ENCODE measurements at regions of chr5 and their contacts with region 1.

Region 1: GRCh38 chr5:148443998-148444397 is 60.2 kb downstream of the FBXO38 start:
- DNase-seq: peak; percentile 79
- H3K4me3 ChIP-seq: no peak overlapping the region
- H3K27ac ChIP-seq: no peak overlapping the region
- H3K4me1 ChIP-seq: no peaks in the 10 kb centered on the region
- H3K27me3 ChIP-seq: no peaks in the 10 kb centered on the region
- CTCF ChIP-seq: peak; percentile 48 to 50
- POLR2A ChIP-seq: no peak

Region 2: DNA sequence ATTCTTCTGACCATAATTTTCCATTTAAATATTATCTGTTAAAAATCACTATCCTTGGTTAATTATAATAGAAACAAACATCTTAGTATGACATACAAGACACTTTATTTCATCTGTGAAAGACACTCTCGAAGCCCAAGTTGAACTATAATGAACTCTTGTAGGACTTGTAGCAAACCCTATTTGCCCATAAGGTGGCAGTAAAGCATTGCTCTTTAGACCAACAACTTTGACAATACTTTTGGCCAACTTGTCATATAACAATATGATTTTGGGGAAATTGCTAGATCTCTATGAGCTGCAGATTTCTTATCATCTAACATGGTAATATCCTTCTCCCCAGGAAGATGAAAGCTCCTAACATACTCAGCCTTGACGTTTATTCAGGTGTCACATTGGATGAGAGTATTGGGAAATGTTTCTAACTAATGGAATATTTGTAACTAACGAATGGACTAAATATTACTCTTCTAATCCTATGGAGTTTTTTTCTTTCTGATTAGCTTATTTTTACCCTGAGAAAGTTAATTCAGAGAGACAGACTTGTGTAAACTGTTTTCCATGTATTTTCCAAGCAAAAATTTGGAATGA is 264.7 kb before region 1 on chr5:
- CTCF ChIA-PET with region 1: interaction called, 24 read pairs
- POLR2A ChIA-PET with region 1: no interaction called
- dilution Hi-C with region 1: no loop called
- intact Hi-C with region 1: loop called (anchors 1 kb)
- DNase-seq: peak; percentile 78
- H3K4me3 ChIP-seq: no peak overlapping the region
- H3K27ac ChIP-seq: no peak overlapping the region
- H3K4me1 ChIP-seq: no peaks in the 10 kb centered on the region
- H3K27me3 ChIP-seq: no peaks in the 10 kb centered on the region
- CTCF ChIP-seq: peak; percentile 53 to 56
- POLR2A ChIP-seq: no peak

Region 3: GRCh38 chr5:148290271-148291195 is 153.5 kb before region 1 on chr5:
- CTCF ChIA-PET with region 1: interaction called, 9 read pairs
- POLR2A ChIA-PET with region 1: no interaction called
- dilution Hi-C with region 1: no loop called
- intact Hi-C with region 1: loop called (anchors 10 kb)
- DNase-seq: peak; percentile 36
- H3K4me3 ChIP-seq: no peak overlapping the region
- H3K27ac ChIP-seq: no peak overlapping the region
- H3K4me1 ChIP-seq: no peaks in the 10 kb centered on the region
- H3K27me3 ChIP-seq: no peaks in the 10 kb centered on the region
- CTCF ChIP-seq: peak; percentile 24 to 42
- POLR2A ChIP-seq: no peak

Region 4: DNA sequence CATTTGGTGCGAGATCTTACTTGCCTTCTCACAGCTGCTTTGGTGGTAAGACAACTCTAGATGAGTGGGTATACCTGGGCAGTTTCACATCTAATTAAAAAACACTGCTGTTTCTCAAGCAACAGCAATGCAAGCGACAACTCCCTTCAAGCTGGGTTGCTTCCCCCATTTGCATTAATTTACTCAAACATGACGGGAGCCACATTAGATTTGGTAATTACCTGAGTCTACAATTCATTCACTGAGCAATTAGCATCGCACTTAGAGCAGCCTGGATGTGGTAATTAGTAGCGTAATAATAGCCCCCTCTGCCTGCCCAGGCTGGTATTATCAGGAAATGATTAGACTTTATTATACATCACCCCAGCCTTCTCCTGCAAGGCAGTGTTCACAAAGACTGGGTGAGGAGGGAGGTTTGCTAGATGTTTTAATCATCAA is 13.2 kb after region 1 on chr5:
- CTCF ChIA-PET with region 1: interaction called, 35 read pairs
- POLR2A ChIA-PET with region 1: no interaction called
- dilution Hi-C with region 1: no loop called
- intact Hi-C with region 1: no loop called
- DNase-seq: peak; percentile 34
- H3K4me3 ChIP-seq: no peak overlapping the region
- H3K27ac ChIP-seq: no peak overlapping the region
- H3K4me1 ChIP-seq: no peaks in the 10 kb centered on the region
- H3K27me3 ChIP-seq: no peaks in the 10 kb centered on the region
- CTCF ChIP-seq: peak; percentile 21 to 39
- POLR2A ChIP-seq: no peak

Region 5: DNA sequence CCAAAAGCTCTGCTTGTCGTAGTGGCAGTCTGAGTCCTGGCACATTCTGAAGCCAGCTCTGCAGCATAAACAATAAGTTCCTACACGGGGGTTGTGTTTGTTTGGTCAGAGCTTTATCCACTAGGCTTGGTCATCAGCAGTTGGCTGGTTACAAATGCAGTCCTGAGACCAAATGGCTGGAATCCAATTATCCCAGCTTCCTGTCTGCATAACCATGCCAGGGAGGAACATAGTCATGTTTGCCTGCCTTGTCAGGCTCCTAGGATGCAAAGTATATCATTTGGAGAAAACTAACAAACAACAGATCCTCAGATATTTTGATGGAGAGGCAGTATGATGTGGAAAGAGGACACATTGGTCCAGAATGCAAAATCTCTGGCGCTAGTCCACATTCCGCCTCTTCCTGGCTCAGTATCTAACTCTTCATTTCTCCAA is 25.5 kb after region 1 on chr5:
- CTCF ChIA-PET with region 1: interaction called, 11 read pairs
- POLR2A ChIA-PET with region 1: no interaction called
- dilution Hi-C with region 1: no loop called
- intact Hi-C with region 1: no loop called
- DNase-seq: peak; percentile 92
- H3K4me3 ChIP-seq: no peak overlapping the region
- H3K27ac ChIP-seq: peak overlapping the region; percentile 82
- H3K4me1 ChIP-seq: peaks cover 55% of the 10 kb centered on the region
- H3K27me3 ChIP-seq: no peaks in the 10 kb centered on the region
- CTCF ChIP-seq: no peak
- POLR2A ChIP-seq: no peak

Region 6: GRCh38 chr5:148482691-148483462 is 38.9 kb after region 1 on chr5:
- CTCF ChIA-PET with region 1: interaction called, 141 read pairs
- POLR2A ChIA-PET with region 1: no interaction called
- dilution Hi-C with region 1: no loop called
- intact Hi-C with region 1: loop called (anchors 1 kb)
- DNase-seq: peak; percentile 59
- H3K4me3 ChIP-seq: no peak overlapping the region
- H3K27ac ChIP-seq: no peak overlapping the region
- H3K4me1 ChIP-seq: no peaks in the 10 kb centered on the region
- H3K27me3 ChIP-seq: peaks cover 0 to 7% of the 10 kb centered on the region in 2 experiments
- CTCF ChIP-seq: peak; percentile 85 to 90
- POLR2A ChIP-seq: no peak

Region 7: DNA sequence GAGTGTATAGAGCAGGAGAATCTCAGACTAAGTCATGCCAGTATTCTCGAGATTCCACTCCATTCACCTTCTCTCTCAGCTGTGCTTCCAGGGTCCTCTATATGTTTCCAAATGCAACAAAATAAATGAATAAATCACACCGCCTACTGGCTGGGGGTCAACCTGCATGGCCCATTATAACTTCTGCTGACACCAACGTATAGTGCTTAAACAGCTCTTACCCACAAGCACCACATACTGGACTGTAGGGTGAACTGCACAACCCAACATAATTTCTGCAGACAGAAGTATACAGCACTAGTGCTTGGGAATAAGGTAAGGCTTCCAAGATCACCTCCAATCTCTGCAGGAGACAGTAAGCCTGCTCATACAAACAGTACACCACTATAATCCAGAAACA is 243.4 kb after region 1 on chr5:
- CTCF ChIA-PET with region 1: interaction called, 21 read pairs
- POLR2A ChIA-PET with region 1: no interaction called
- dilution Hi-C with region 1: no loop called
- intact Hi-C with region 1: loop called (anchors 1 kb)
- DNase-seq: peak; percentile 58
- H3K4me3 ChIP-seq: no peak overlapping the region
- H3K27ac ChIP-seq: no peak overlapping the region
- H3K4me1 ChIP-seq: no peaks in the 10 kb centered on the region
- H3K27me3 ChIP-seq: peaks cover 0 to 4% of the 10 kb centered on the region in 2 experiments
- CTCF ChIP-seq: peak; percentile 52 to 66
- POLR2A ChIP-seq: no peak

Measured in endothelial cell of umbilical vein (primary cell).